Prostate gland (tissue), 2 donors: ENCODE measurements at regions of chr6 and their contacts with region 1.

Region 1: DNA sequence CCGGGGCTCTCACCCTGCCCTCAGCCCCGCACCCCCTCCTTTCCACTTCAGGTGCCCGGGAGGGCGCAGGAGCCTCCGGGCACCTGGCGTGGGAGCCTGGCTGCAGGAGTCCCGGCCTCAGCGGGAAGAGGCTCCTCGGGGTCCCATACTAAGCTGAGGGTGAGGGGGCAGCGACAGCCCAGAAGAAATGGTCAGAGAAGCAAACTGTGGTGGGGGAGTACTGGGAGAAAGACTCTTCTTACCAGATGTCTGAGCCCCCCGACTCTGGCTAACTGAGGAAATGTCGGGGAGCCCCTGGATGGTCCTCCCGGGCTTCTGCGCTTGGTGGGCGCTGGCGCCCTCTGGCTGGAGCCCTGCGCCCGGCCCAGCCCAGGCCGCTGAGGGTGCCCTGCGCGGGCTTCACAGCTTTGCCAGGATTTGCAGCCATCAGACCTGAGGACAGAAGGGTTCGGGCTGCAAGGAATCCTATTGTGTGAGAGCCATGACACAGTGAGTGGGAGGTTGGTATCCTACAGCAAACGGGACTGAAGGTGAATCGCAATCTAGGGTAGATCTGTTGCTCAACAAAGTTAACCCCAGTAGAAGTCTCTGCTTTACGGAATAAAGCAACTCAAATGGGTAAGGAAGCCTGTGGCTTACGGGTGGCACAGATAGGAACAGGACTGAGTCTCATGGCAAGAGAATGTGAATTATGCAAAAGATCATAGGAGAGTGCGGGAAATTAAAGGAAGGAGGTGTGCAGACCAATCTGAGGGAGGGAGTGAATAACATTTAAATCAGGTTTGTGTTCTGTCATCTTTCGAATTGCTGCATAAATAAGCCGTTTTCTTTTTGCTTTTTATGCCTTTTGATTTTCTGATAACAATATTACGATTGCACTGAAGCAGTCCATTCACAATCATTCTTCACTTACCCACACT is 639 bp upstream of the RCAN2 start:
- DNase-seq: peak; percentile 32
- H3K4me3 ChIP-seq: peak overlapping the region; percentile 50 to 64
- H3K27ac ChIP-seq: peak overlapping the region; percentile 67 to 78
- H3K4me1 ChIP-seq: no peaks in the 10 kb centered on the region
- H3K27me3 ChIP-seq: no peaks in the 10 kb centered on the region
- CTCF ChIP-seq: peak in 3 of 4 experiments; percentile 56 to 74 (median 60)
- POLR2A ChIP-seq: no peak

Region 2: GRCh38 chr6:46042355-46042999 is 449.4 kb before region 1 on chr6:
- intact Hi-C with region 1: no loop called
- DNase-seq: no peak
- H3K4me3 ChIP-seq: no peak overlapping the region
- H3K27ac ChIP-seq: no peak overlapping the region
- H3K4me1 ChIP-seq: no peaks in the 10 kb centered on the region
- H3K27me3 ChIP-seq: no peaks in the 10 kb centered on the region
- CTCF ChIP-seq: peak in 3 of 4 experiments; percentile 23 to 60 (median 44)
- POLR2A ChIP-seq: no peak

Region 3: GRCh38 chr6:46419576-46420002 is 72.3 kb before region 1 on chr6:
- intact Hi-C with region 1: loop called (anchors 2 kb)
- DNase-seq: peak; percentile 62
- H3K4me3 ChIP-seq: no peak overlapping the region
- H3K27ac ChIP-seq: no peak overlapping the region
- H3K4me1 ChIP-seq: no peaks in the 10 kb centered on the region
- H3K27me3 ChIP-seq: no peaks in the 10 kb centered on the region
- CTCF ChIP-seq: peak; percentile 37 to 84 (median 74)
- POLR2A ChIP-seq: no peak